ENCODE measurements at regions of chr3 and their contacts with region 1.

Region 1: GRCh38 chr3:16496408-16497222 is 16.9 kb downstream of the RFTN1 start:
- DNase-seq: peak in 1 of 3 donors; percentile 57
- H3K4me3 ChIP-seq: no peak overlapping the region
- H3K27ac ChIP-seq: no peak overlapping the region
- H3K4me1 ChIP-seq: peaks cover 2 to 40% (median 33%) of the 10 kb centered on the region in 4 experiments
- H3K27me3 ChIP-seq: no peaks in the 10 kb centered on the region

Region 2: GRCh38 chr3:16482770-16483531 is 13.7 kb before region 1 on chr3:
- CTCF ChIA-PET with region 1: interaction called, 21 read pairs
- POLR2A ChIA-PET with region 1: interaction called, 4 read pairs
- DNase-seq: peak; percentile 47 to 74 (median 64)
- H3K4me3 ChIP-seq: peak overlapping the region in 2 of 7 experiments; percentile 21 to 62
- H3K27ac ChIP-seq: no peak overlapping the region
- H3K4me1 ChIP-seq: peaks cover 26 to 70% (median 43%) of the 10 kb centered on the region in 4 experiments
- H3K27me3 ChIP-seq: no peaks in the 10 kb centered on the region

Region 3: GRCh38 chr3:16511681-16512434 is 15.2 kb after region 1 on chr3:
- CTCF ChIA-PET with region 1: interaction called, 21 read pairs
- POLR2A ChIA-PET with region 1: interaction called, 5 read pairs
- DNase-seq: peak; percentile 92 to 98 (median 98)
- H3K4me3 ChIP-seq: peak overlapping the region in 6 of 7 experiments; percentile 85 to 96 (median 88)
- H3K27ac ChIP-seq: peak overlapping the region; percentile 77 to 78
- H3K4me1 ChIP-seq: peaks cover 18 to 90% (median 73%) of the 10 kb centered on the region in 4 experiments
- H3K27me3 ChIP-seq: no peaks in the 10 kb centered on the region

Region 4: GRCh38 chr3:17039580-17039979 is 543.0 kb after region 1 on chr3:
- CTCF ChIA-PET with region 1: no interaction called
- POLR2A ChIA-PET with region 1: no interaction called
- DNase-seq: peak; percentile 27 to 72 (median 58)
- H3K4me3 ChIP-seq: no peak overlapping the region
- H3K27ac ChIP-seq: no peak overlapping the region
- H3K4me1 ChIP-seq: peaks cover 9 to 19% (median 11%) of the 10 kb centered on the region in 4 experiments
- H3K27me3 ChIP-seq: no peaks in the 10 kb centered on the region

Measured in common myeloid progenitor, CD34-positive (primary cell).